Activated T-helper 1 cell treated with anti-CD3 and anti-CD28 coated beads, Interleukin-12 subunit alpha, Interleukin-12 subunit beta, Interleukin-2, Interleukin-4 antibody, amounts not matched to agents 30 ng/mL and 10 ng/mL and 1 ng/mL, durations not matched to agents 14 hours and 24 hours and 36 hours (primary cell): ENCODE measurements at regions of chr9 and their contacts with region 1.

Region 1: GRCh38 chr9:83937911-83938323 is 16.7 kb upstream of the KIF27 start:
- DNase-seq: peak; percentile 20
- H3K4me3 Mint-ChIP-seq: no peak overlapping the region
- H3K27ac Mint-ChIP-seq: no peak overlapping the region
- H3K4me1 Mint-ChIP-seq: peaks cover 5% of the 10 kb centered on the region
- H3K27me3 Mint-ChIP-seq: peaks cover 2% of the 10 kb centered on the region

Region 2: GRCh38 chr9:84170521-84171141 is 232.7 kb after region 1 on chr9:
- intact Hi-C with region 1: loop called (anchors 1 kb)
- DNase-seq: no peak
- H3K4me3 Mint-ChIP-seq: no peak overlapping the region
- H3K27ac Mint-ChIP-seq: no peak overlapping the region
- H3K4me1 Mint-ChIP-seq: no peaks in the 10 kb centered on the region
- H3K27me3 Mint-ChIP-seq: peaks cover 2% of the 10 kb centered on the region

Region 3: DNA sequence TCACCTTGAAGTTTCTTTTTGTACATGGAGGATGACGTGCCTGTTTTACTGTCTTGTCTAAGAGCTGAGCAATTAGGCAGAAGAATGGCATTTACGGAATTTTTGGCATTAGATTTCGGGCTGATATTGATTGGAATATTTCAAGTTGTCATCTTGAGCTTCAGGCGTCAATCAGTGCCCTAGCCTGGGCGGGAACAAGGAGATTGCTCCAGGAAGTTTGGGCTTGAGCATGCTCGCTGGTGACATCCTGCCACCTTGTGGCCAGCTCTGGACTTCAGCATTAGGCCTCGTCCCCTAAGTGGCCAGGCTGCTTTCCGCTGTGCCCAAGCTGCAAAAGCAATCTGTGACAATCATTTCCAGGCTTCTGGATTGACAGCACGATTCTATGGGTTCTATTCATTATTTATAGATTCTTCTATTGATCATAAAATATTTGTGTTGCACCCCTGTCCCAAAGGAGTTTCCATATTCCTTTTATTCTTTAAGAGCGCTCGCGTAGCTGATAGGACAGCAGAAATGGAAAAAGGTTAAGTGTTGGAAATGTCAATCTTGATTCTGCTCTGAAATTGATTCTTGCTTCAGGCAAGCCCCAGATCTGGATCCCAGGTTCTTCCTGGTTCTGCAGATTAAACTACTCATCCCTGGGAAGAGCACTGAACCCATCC is 323.3 kb after region 1 on chr9:
- intact Hi-C with region 1: loop called (anchors 1 kb)
- DNase-seq: peak; percentile 33
- H3K4me3 Mint-ChIP-seq: no peak overlapping the region
- H3K27ac Mint-ChIP-seq: no peak overlapping the region
- H3K4me1 Mint-ChIP-seq: peaks cover 21% of the 10 kb centered on the region
- H3K27me3 Mint-ChIP-seq: no peaks in the 10 kb centered on the region